ENCODE measurements at regions of chr11 and their contacts with region 1.

Region 1: DNA sequence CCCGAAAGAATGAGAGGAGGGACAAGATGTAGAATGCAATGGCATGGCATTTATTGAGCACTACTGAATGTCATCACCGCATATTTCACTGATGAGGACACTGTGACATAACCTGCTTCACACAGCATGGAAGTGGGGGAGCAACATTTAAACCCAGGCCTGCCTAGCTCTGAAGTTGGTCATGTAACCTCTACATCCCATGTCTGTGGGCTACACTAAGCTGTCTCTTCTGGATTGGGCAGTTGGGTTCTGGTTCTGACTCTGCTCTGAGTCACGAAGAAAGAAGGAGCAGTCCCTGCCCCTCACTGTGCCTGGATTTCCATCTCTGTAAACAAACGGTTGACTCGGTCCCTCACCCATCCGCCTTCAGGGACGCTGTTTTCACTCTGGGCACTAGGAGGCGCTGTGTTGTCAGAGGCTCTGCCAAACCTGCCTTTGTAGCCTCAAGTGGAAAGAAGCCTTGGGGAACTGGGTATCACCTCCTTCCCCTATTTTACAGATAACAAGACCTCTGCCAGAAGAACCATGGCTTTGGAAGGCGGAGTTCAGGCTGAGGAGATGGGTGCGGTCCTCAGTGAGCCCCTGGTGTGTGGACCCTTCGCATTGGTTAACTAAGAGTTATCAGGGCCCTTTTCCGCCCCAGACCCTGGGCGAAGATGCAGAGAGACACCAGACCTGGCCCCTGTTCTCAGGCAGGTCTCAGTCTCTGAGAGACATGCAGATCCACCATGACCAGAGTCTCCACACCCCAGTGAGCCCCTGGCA is 12.7 kb upstream of the ARHGEF17 start:
- DNase-seq: peak; percentile 67 to 73
- ATAC-seq: peak in 7 of 8 donors; percentile 18 to 56 (median 46)
- H3K4me3 ChIP-seq: no peak overlapping the region
- H3K27ac ChIP-seq: no peak overlapping the region
- H3K4me1 ChIP-seq: peaks cover 0 to 19% (median 7%) of the 10 kb centered on the region in 9 donors
- H3K27me3 ChIP-seq: no peaks in the 10 kb centered on the region
- CTCF ChIP-seq: peak; percentile 58 to 95 (median 89)

Region 2: DNA sequence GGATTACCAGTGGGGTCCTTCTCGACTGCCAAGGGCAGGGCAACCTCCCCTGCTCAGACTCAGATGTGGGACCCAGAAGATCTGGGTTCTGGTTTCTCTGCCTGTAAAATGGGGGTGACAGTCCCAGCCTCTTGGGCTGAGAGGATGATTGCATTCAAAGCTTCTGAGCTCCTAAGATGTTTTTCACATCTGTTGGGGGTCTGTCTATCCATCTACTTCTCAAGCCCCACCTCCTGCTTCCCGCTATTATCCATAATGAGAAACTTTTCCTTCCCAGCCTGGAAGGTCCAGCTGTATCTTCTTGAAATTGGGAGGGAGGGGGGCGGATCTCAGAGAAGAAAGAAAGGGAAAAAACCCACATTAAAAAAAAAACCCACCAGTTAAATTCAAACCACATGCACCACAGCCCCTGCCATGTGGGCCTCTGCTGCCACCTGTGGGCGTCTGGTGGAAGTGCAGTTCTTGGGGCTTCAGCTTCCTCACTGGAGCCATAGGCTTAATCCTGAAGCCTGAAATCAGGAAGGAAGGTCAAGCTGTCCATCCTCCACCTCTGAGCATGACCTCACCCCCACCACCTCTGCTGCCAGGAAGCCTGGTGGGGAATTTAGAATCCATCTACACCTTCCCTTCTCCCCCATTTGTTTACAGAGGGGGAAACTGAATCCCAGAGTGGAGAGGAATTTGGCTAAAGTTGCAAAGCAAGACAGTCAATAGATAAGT is 40.0 kb after region 1 on chr11:
- intact Hi-C with region 1: loop called in 1 of 10 experiments (anchors 1 kb)
- DNase-seq: peak; percentile 88 to 89
- ATAC-seq: peak; percentile 46 to 83 (median 63)
- H3K4me3 ChIP-seq: peak overlapping the region in 4 of 10 donors; percentile 9 to 25 (median 18)
- H3K27ac ChIP-seq: peak overlapping the region; percentile 45 to 90 (median 78)
- H3K4me1 ChIP-seq: peaks cover 37 to 94% (median 56%) of the 10 kb centered on the region in 9 donors
- H3K27me3 ChIP-seq: no peaks in the 10 kb centered on the region
- CTCF ChIP-seq: peak; percentile 96 to 100 (median 99)

Region 3: GRCh38 chr11:73376160-73376802 is 80.9 kb after region 1 on chr11 and contains the start of gene RELT:
- intact Hi-C with region 1: no loop called
- DNase-seq: peak; percentile 85 to 93
- ATAC-seq: peak; percentile 82 to 94 (median 91)
- H3K4me3 ChIP-seq: peak within 1 kb of the TSS; percentile 54 to 95 (median 74)
- H3K27ac ChIP-seq: peak within 1 kb of the TSS in 9 of 10 donors; percentile 64 to 99 (median 82)
- H3K4me1 ChIP-seq: peaks cover 12 to 67% (median 48%) of the 10 kb centered on the region in 9 donors
- H3K27me3 ChIP-seq: no peaks in the 10 kb centered on the region
- CTCF ChIP-seq: peak; percentile 89 to 98 (median 94)
- total RNA-seq, gene RELT: 1.0 to 9.2 (median 2.7) TPM

Region 4: DNA sequence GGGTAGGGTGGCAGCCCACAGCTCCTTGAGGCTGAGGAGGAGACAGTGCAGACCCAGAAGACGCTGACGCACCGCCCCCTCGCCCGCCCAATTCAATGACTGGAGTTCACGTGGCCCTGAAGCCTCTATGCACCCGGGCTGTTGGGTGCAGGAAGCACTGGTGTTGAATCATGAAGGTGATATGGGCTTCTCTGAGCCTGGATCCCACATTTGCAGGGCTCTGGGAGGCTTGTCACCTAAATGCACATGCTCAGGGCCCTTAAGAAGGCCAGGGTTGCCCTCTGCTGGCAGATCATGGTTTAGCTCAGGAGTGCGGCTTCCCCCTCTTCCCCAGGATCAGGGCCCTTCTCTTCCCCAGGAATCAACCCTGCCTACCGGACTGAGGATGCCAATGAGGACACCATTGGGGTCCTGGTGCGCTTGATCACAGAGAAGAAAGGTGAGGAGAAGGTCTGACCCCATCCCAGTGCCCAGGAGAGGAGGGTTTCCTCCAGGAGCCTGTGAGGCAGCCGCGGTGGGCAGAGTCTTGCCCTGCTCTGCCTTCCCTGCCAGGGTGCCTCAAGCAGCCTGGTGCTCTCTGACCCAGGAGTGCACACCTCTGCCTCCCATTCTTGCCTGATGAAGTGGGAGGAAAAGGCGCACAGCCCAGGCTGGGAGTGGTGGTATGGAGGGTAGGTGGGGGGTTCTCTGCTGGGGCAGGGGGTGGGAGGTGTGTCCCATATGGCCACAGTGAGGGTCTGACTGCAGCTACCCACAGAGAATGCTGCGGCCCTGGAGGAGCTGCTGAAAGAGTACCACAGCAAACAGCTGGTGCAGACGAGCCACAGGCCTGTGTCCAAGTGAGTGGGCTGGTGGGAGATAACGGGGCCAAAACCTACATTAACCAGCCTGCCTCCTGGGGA is 98.3 kb after region 1 on chr11:
- intact Hi-C with region 1: loop called in 4 of 10 experiments (anchors 5 to 10 kb)
- DNase-seq: peak; percentile 70 to 75
- ATAC-seq: peak; percentile 63 to 80 (median 70)
- H3K4me3 ChIP-seq: no peak overlapping the region
- H3K27ac ChIP-seq: peak overlapping the region in 1 of 10 donors; percentile 58
- H3K4me1 ChIP-seq: peaks cover 8 to 53% (median 13%) of the 10 kb centered on the region in 9 donors
- H3K27me3 ChIP-seq: no peaks in the 10 kb centered on the region
- CTCF ChIP-seq: peak; percentile 67 to 89 (median 83)